A673 (cell line): ENCODE measurements at regions of chr10 and their contacts with region 1.

Region 1: GRCh38 chr10:15223174-15223573 is 54.7 kb upstream of the NMT2 start:
- DNase-seq: no peak
- H3K4me3 ChIP-seq: no peak overlapping the region
- H3K27ac ChIP-seq: no peak overlapping the region
- H3K4me1 ChIP-seq: no peaks in the 10 kb centered on the region
- H3K27me3 ChIP-seq: no peaks in the 10 kb centered on the region
- CTCF ChIP-seq: no peak

Region 2: GRCh38 chr10:15137636-15138035 is 85.5 kb before region 1 on chr10:
- CTCF ChIA-PET with region 1: no interaction called
- POLR2A ChIA-PET with region 1: interaction called, 10 read pairs
- intact Hi-C with region 1: no loop called
- DNase-seq: no peak
- H3K4me3 ChIP-seq: no peak overlapping the region
- H3K27ac ChIP-seq: no peak overlapping the region
- H3K4me1 ChIP-seq: peaks cover 11% of the 10 kb centered on the region
- H3K27me3 ChIP-seq: no peaks in the 10 kb centered on the region
- CTCF ChIP-seq: no peak